Endothelial cell of umbilical vein (primary cell): ENCODE measurements at regions of chr20 and their contacts with region 1.

Region 1: DNA sequence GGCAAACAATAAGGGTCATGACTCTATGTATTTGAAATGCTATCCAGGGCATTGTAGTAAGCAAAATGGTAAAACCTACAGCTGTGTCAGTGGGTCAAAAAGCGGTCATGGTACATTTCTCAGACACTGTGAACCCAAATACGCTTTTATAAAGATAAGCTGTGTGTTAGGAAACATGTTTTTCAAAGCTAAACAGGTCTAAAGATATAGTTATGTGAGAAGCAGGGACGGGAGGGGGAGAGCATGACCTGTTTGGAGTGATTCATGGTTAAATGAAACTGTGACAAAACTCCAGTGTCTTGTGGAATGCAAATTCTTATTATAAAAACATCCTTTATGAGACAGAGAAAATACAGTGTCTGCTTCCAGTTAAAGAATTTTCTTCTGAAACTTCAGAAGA is 205.4 kb upstream of the BMP2 start:
- DNase-seq: peak; percentile 99
- H3K4me3 ChIP-seq: no peak overlapping the region
- H3K27ac ChIP-seq: peak overlapping the region; percentile 82
- H3K4me1 ChIP-seq: peaks cover 24% of the 10 kb centered on the region
- H3K27me3 ChIP-seq: no peaks in the 10 kb centered on the region
- CTCF ChIP-seq: no peak
- POLR2A ChIP-seq: no peak

Region 2: GRCh38 chr20:6341491-6341890 is 220.6 kb before region 1 on chr20:
- CTCF ChIA-PET with region 1: no interaction called
- POLR2A ChIA-PET with region 1: no interaction called
- dilution Hi-C with region 1: no loop called
- intact Hi-C with region 1: no loop called
- DNase-seq: no peak
- H3K4me3 ChIP-seq: no peak overlapping the region
- H3K27ac ChIP-seq: no peak overlapping the region
- H3K4me1 ChIP-seq: no peaks in the 10 kb centered on the region
- H3K27me3 ChIP-seq: no peaks in the 10 kb centered on the region
- CTCF ChIP-seq: no peak
- POLR2A ChIP-seq: no peak

Region 3: GRCh38 chr20:6468423-6469116 is 93.5 kb before region 1 on chr20:
- CTCF ChIA-PET with region 1: interaction called, 3 read pairs
- POLR2A ChIA-PET with region 1: no interaction called
- dilution Hi-C with region 1: no loop called
- intact Hi-C with region 1: loop called (anchors 2 kb)
- DNase-seq: peak; percentile 37
- H3K4me3 ChIP-seq: no peak overlapping the region
- H3K27ac ChIP-seq: peak overlapping the region; percentile 33
- H3K4me1 ChIP-seq: peaks cover 12% of the 10 kb centered on the region
- H3K27me3 ChIP-seq: no peaks in the 10 kb centered on the region
- CTCF ChIP-seq: no peak
- POLR2A ChIP-seq: no peak

Region 4: DNA sequence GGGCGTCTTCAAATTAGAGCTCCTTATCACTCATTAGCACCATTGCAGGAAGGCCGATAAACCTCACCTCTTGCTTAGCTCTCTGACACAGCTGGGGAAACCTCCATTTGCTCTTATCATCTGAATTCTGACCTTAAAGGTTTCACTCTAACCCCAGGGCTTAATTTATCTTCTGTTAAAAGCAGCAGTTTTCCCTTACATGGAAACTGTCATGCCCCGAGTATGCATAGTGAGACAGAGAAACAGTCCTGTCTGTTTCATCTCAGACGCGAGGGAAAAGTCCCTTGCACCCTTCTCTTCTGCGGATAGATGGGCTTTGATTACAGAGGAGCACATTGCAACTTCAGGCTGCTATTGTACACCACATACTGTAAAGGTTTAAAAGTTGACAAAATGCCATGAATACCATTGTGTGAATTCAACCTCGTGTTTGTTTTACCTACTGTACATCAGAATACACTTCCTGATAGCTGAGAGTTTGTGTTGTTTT is 13.8 kb after region 1 on chr20:
- CTCF ChIA-PET with region 1: interaction called, 4 read pairs
- POLR2A ChIA-PET with region 1: no interaction called
- dilution Hi-C with region 1: no loop called
- intact Hi-C with region 1: loop called (anchors 1 kb)
- DNase-seq: peak; percentile 85
- H3K4me3 ChIP-seq: peak overlapping the region in 1 of 3 experiments; percentile 9
- H3K27ac ChIP-seq: peak overlapping the region; percentile 37
- H3K4me1 ChIP-seq: peaks cover 23% of the 10 kb centered on the region
- H3K27me3 ChIP-seq: no peaks in the 10 kb centered on the region
- CTCF ChIP-seq: no peak
- POLR2A ChIP-seq: no peak

Region 5: DNA sequence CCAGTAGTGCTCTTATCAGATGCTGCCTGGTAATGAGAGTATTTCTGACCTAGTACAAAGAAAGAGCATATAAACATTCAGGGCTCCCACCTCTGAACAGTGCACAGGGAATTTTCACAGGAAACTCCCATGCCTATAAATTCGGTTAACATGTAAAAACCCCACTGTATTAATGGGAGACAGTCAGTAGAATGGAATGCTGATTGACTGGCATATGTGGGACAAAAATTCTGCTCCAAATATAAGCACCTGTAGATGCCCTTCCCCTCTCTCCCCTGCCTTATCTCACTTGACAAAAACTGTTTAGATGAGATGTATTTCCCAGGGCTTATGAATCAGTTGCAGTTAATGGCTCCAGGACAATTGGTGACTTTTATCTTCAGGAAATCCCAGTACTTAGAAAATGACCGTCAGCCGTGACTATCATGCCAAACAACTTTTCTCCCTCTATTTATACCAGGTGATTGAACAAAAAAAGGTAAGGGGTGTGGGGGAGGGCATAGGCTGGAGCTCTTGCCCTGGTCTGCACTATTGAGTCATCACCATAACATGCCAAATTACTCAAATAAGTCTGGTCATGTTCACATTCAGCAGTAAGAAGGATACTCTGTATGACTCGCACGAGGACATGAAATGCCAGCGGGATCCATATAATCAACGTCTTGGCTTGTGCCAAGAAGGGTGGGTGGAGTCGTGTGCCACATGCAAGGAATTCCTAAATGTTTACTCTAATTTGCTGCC is 28.9 kb after region 1 on chr20:
- CTCF ChIA-PET with region 1: no interaction called
- POLR2A ChIA-PET with region 1: no interaction called
- dilution Hi-C with region 1: no loop called
- intact Hi-C with region 1: loop called (anchors 1 kb)
- DNase-seq: peak; percentile 83
- H3K4me3 ChIP-seq: no peak overlapping the region
- H3K27ac ChIP-seq: peak overlapping the region; percentile 73
- H3K4me1 ChIP-seq: peaks cover 32% of the 10 kb centered on the region
- H3K27me3 ChIP-seq: no peaks in the 10 kb centered on the region
- CTCF ChIP-seq: no peak
- POLR2A ChIP-seq: no peak